HAP-1 (cell line): ENCODE measurements at regions of chr21 and their contacts with region 1.

Region 1: DNA sequence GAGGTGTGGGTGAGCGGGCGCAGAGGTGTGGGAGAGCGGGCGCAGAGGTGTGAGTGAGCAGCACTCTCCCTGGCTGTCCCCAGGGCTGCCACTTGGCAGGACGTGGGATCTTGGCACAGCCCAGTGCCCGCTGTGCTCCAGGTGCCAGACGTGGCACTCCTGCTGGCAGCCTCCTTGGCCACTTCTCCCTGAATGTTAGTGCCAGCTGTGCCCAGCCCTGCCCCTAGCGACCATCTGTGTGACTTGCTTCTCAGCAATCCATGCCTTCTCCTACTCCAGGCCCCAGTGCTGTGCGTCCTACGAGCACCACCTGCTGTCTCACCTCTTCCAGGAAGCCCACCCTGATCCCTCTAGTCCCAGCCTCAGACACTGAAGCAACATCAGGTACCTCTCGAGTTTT is 30.5 kb downstream of the KRTAP10-1 start:
- DNase-seq: no peak
- H3K4me3 ChIP-seq: no peak overlapping the region
- H3K4me1 ChIP-seq: no peaks in the 10 kb centered on the region
- H3K27me3 ChIP-seq: no peaks in the 10 kb centered on the region; the same call in 1 of the 2 replicates

Region 2: GRCh38 chr21:44792702-44793591 is 283.4 kb after region 1 on chr21:
- in situ Hi-C with region 1: loop called (anchors 5 kb)
- DNase-seq: peak; percentile 50 to 60
- H3K4me3 ChIP-seq: no peak overlapping the region
- H3K4me1 ChIP-seq: peaks cover 8% of the 10 kb centered on the region; the same call in 1 of the 2 replicates
- H3K27me3 ChIP-seq: no peaks in the 10 kb centered on the region